HEK293 (cell line): ENCODE measurements at regions of chr2 and their contacts with region 1.

Region 1: GRCh38 chr2:24977631-24978030 is 5.9 kb upstream of the DNAJC27 start:
- H3K4me3 ChIP-seq: no peak overlapping the region
- H3K27ac ChIP-seq: no peak overlapping the region
- H3K4me1 ChIP-seq: no peaks in the 10 kb centered on the region; the same call in 1 of the 2 replicates
- CTCF ChIP-seq: no peak

Region 2: GRCh38 chr2:24652265-24653182 is 325.1 kb before region 1 on chr2:
- CTCF ChIA-PET with region 1: no interaction called
- POLR2A ChIA-PET with region 1: no interaction called
- H3K4me3 ChIP-seq: no peak overlapping the region
- H3K27ac ChIP-seq: no peak overlapping the region
- H3K4me1 ChIP-seq: peaks cover 4% of the 10 kb centered on the region; the same call in 1 of the 2 replicates
- CTCF ChIP-seq: no peak

Region 3: DNA sequence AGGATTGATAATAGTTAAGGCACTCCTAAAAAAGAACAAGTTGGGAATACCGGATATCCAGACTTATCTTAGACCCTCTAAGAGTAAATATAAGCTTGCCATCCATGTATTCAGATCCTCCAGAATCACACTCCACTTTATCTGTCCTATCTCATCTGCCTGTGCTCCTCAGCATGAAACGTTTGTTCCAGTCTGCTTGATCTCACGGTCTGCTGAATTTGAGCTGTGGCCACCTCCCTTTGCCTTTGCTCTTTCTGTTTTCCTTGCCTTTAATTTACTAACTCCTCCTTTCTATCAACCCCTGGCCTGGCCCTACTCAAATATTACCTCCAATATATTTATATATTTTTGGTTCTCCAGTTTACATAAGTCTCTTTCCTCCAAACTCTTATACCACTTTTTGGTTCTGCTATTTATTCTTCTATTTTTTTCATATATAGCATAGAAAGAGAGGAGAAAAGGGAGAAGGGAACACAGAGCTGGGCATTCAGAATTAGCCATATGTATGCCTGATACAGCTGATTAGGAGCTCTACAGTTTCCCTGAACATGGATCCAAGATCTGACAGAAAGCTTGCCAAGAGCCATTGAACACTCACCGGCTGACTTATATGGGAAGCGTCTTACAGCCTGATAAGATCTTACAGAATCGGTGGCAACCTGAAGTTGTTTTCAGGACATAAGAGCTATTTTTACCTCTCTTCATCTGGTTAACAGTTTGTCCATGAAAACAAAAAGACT is 15.9 kb after region 1 on chr2:
- CTCF ChIA-PET with region 1: interaction called, 35 read pairs
- POLR2A ChIA-PET with region 1: no interaction called
- H3K4me3 ChIP-seq: no peak overlapping the region
- H3K27ac ChIP-seq: no peak overlapping the region
- H3K4me1 ChIP-seq: peaks cover 8% of the 10 kb centered on the region
- CTCF ChIP-seq: no peak

Region 4: DNA sequence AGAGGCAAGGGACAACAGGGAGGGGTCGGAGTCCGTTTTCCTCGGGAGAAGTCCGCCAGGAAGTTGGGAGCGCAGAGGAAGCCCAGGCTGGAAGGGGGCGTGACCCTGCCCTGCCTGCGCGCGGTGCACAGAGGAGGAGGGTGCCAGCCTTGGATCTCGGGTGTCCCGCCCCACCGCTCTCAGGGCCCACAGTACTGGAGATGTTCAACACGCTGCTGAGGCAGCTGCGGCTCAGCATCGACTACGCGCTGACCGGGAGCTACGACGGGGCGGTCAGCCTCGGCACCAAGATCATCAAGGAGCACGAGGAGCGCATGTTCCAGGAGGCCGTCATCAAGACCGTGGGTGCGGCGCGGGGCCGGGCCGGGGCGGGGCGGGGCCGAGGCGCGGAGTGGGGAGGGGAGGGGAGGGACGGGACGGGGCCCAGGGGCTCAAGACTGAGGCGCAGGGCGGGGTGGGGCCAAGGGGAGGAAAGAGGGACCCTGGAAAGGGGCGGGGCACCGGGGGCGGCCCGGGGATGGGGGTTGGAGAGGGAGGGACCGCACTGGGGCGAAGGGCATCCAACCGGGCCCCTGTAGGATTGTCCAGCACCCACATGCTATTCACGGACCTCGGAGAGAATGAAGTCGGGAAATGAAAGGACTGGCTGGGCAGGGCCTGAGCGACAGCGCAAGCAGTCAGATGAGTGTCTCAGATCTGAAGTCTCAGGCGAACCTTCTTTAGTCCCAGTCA is 154.1 kb after region 1 on chr2:
- CTCF ChIA-PET with region 1: interaction called, 114 read pairs
- POLR2A ChIA-PET with region 1: interaction called, 10 read pairs
- H3K4me3 ChIP-seq: no peak overlapping the region
- H3K27ac ChIP-seq: no peak overlapping the region
- H3K4me1 ChIP-seq: no peaks in the 10 kb centered on the region
- CTCF ChIP-seq: no peak